Posterior vena cava (tissue), 2 donors: ENCODE measurements at regions of chr1 and their contacts with region 1.

Region 1: DNA sequence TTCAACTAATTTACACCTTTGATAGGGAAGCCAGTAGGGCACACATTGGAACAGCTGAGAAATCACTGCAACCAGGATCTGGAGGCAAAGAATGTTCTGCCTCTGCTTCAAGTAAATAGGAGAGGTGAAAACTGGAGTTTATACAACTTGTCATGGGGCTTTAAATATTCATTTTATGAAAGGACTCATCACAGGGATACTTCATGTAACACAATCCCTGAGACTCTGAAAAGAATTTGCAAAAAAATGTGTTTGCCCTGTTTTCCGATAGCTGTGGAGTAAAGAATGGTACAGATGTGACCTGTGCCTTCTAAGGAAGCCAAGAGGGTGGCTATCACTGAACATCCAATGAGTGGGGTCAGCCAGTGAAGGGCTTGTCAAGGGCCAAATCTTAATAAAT is 152.0 kb downstream of the LMX1A start:
- DNase-seq: no peak

Region 2: DNA sequence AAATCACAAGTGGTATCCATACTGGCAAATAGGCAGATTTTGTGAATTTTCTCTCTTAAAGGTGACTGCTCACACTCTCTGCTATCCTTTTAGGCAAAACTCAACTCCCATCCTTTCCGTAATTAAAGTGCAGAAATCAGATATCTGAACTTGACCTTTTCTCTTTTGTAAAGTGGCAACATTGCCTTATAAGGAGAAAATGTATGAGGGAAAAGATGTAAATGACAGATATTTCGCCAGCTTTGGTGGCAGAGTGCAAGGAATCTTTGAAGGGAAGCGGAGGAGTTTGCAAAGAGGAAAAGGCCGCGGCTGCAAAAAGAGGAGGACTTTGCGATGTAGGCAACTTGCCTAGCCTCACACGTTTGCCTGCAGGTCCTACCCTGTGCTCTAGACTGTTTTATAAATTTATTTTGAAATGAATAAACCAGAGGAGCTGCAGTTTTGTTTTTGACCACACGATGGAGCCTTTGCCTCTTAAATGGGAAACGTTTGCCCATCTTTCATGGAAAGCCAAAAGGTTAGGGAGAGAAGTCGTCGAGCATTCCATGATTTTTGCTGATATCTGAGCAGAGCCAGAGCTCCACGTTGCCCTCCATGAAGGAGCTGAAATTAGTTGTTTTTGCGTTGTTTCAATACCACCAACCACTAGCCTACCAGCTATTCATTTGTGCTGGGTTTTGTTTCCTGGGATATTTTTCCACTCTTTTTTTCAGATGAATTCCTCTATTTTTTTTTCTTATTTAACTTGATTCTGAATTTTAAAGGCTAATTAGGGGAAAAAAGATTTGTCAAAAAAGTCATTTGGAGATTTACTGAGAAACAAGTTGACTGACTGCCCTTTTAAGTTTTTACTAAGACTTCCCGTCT is 90.3 kb before region 1 on chr1:
- intact Hi-C with region 1: no loop called
- DNase-seq: no peak

Region 3: GRCh38 chr1:165152727-165153126 is 51.8 kb before region 1 on chr1:
- intact Hi-C with region 1: loop called in 1 of 2 experiments (anchors 2 kb)
- DNase-seq: no peak